OCI-LY7 (cell line): ENCODE measurements at regions of chr2 and their contacts with region 1.

Region 1: DNA sequence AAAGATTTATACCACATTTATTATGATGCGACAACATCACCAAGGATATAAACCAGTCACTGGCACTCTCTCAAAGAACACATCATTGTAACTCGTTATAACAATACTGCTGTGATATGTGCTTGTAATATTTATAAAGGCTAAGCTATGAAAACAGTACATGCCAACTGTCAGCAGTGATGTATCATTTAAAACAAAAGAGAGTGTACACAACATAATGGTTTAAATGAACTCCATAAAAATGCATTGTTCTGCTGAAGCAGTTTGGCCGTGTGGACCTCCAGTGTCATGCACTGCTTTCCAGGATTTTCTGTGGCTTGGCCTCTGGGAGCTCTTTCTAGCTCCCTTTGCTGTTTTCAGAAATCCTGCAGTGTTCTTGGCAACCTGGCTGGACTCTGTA is 215.6 kb downstream of the MTX2 start:
- DNase-seq: no peak
- H3K4me3 ChIP-seq: no peak overlapping the region
- H3K27ac ChIP-seq: no peak overlapping the region
- H3K4me1 ChIP-seq: no peaks in the 10 kb centered on the region
- CTCF ChIP-seq: no peak

Region 2: GRCh38 chr2:176188774-176189680 is 295.8 kb before region 1 on chr2:
- CTCF ChIA-PET with region 1: no interaction called
- POLR2A ChIA-PET with region 1: interaction called, 10 read pairs
- intact Hi-C with region 1: no loop called
- DNase-seq: no peak
- H3K4me3 ChIP-seq: no peak overlapping the region
- H3K27ac ChIP-seq: no peak overlapping the region
- H3K4me1 ChIP-seq: no peaks in the 10 kb centered on the region
- CTCF ChIP-seq: no peak

Region 3: DNA sequence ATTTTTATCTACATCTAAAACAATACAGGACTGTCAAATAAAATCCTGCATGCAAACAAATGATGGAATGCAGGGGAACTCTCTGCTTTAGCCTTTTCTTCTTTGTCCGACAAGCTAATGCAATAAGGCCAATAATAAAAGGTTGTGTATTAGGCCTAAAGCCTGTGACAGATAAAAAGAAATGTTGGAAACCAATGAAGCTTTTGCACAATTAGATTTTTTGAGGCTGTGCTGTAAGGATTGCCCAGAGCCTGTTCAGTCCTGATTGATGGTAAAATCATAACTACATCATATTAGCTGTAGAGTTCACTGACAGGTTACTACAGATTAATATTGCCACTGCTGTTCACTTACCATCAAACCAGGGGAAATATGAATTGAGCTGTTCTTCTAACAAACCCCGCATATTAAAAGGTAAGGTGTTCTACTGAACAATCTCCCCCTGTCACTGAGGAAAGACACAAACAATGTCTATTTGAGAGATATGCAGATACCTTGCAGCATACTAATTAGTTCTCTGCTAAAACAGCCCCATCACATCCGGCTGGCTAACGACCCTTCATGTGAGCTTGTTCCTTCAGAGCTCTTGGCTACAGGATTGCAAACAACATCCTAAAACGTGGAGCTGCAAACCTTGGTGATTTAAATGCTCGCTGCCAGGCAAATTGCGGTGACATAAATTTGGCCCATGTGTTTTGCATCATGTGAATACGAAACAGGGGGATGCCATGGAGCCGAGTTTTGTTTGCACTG is 89.8 kb after region 1 on chr2:
- CTCF ChIA-PET with region 1: no interaction called
- POLR2A ChIA-PET with region 1: no interaction called
- intact Hi-C with region 1: no loop called
- DNase-seq: no peak
- H3K4me3 ChIP-seq: no peak overlapping the region
- H3K27ac ChIP-seq: no peak overlapping the region
- H3K4me1 ChIP-seq: no peaks in the 10 kb centered on the region
- CTCF ChIP-seq: no peak